B cell (primary cell): ENCODE measurements at regions of chr5 and their contacts with region 1.

Region 1: DNA sequence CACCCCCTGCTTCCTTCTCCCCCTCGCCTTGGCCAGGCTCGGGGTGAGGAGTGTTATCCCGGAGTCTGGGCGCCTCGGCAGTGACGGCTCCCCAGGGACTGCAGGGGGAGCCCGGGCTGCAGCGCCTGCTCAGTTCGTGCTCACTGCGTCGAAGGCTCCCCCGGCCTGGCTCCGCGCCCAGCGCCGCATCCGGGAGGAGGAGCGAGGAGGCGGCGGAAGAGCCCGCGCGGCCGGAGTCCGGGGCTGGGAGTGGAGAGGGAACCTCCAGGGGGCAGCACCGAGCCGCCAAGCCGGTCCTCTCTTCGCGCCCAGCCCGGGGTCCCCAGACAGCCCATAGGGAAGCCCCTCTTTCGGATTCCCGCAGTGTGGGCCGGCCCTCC is 1.3 kb upstream of the EGR1 start:
- DNase-seq: peak; percentile 96
- ATAC-seq: peak; percentile 53
- H3K4me3 ChIP-seq: peak overlapping the region; percentile 57 to 98 (median 67)
- H3K4me3 Mint-ChIP-seq: peak overlapping the region; percentile 94
- H3K27ac ChIP-seq: peak overlapping the region; percentile 89 to 98
- H3K27ac Mint-ChIP-seq: peak overlapping the region; percentile 81
- H3K4me1 ChIP-seq: peaks cover 27 to 43% of the 10 kb centered on the region in 2 donors
- H3K4me1 Mint-ChIP-seq: peaks cover 52% of the 10 kb centered on the region
- H3K27me3 ChIP-seq: no peaks in the 10 kb centered on the region
- H3K27me3 Mint-ChIP-seq: no peaks in the 10 kb centered on the region
- CTCF ChIP-seq: peak; percentile 93

Region 2: GRCh38 chr5:137264573-137264972 is 1199.4 kb before region 1 on chr5:
- CTCF ChIA-PET with region 1: no interaction called
- POLR2A ChIA-PET with region 1: no interaction called
- intact Hi-C with region 1: no loop called
- DNase-seq: no peak
- ATAC-seq: no peak
- H3K4me3 ChIP-seq: no peak overlapping the region
- H3K4me3 Mint-ChIP-seq: no peak overlapping the region
- H3K27ac ChIP-seq: no peak overlapping the region
- H3K27ac Mint-ChIP-seq: no peak overlapping the region
- H3K4me1 ChIP-seq: no peaks in the 10 kb centered on the region
- H3K4me1 Mint-ChIP-seq: no peaks in the 10 kb centered on the region
- H3K27me3 ChIP-seq: no peaks in the 10 kb centered on the region
- H3K27me3 Mint-ChIP-seq: peaks cover 11% of the 10 kb centered on the region
- CTCF ChIP-seq: no peak

Region 3: GRCh38 chr5:138213161-138214029 is 250.6 kb before region 1 on chr5 and contains the start of gene CDC23:
- CTCF ChIA-PET with region 1: no interaction called
- POLR2A ChIA-PET with region 1: no interaction called
- intact Hi-C with region 1: loop called (anchors 1 kb)
- DNase-seq: peak; percentile 95
- ATAC-seq: peak; percentile 97
- H3K4me3 ChIP-seq: peak within 1 kb of the TSS; percentile 77 to 99 (median 93)
- H3K4me3 Mint-ChIP-seq: peak within 1 kb of the TSS; percentile 93
- H3K27ac ChIP-seq: peak within 1 kb of the TSS; percentile 52 to 87
- H3K27ac Mint-ChIP-seq: peak within 1 kb of the TSS; percentile 92
- H3K4me1 ChIP-seq: peaks cover 10 to 20% of the 10 kb centered on the region in 2 donors
- H3K4me1 Mint-ChIP-seq: peaks cover 19% of the 10 kb centered on the region
- H3K27me3 ChIP-seq: no peaks in the 10 kb centered on the region
- H3K27me3 Mint-ChIP-seq: no peaks in the 10 kb centered on the region
- CTCF ChIP-seq: no peak
- total RNA-seq, gene CDC23: 29.7 and 35.4 TPM in 2 replicates

Region 4: DNA sequence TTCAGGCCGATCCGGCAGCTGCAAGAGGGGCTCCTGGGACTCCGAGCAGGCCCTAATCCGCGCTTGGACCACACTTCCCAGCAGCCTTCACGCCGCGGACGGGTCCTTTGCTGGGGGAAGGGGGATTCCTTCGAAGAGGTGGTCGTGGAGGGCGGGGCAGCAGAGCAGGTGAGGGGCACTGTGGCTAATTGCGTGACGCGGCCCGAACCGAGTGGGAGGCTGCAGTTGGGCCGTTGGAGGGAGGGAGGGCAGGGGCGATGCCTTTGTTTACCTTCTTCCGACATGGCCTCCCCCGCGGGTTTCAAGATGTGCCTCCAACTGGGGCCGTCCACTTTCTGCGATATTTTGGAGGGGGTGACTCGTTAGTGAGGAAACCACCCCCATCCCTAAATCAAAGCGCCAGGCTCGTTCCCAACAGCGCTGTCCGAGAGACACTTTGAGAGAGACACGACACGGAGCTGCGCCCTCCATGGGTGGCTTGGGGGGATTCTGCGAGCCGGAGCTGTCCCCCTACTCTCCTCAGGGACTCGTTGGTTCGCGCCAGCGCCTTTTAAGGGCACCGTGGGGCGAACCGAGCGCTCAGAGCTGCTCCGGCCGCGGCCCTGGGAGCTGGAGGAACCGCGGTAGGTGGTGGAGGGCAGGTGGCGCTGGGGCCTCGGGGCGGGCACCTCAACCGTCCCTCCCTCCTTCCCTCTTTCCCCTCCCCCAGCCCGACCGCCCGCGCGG is 126.2 kb before region 1 on chr5 and contains the start of gene FAM53C:
- CTCF ChIA-PET with region 1: interaction called, 3 read pairs
- POLR2A ChIA-PET with region 1: no interaction called
- intact Hi-C with region 1: loop called (anchors 1 kb)
- DNase-seq: peak; percentile 99
- ATAC-seq: peak; percentile 82
- H3K4me3 ChIP-seq: peak within 1 kb of the TSS; percentile 55 to 90 (median 67)
- H3K4me3 Mint-ChIP-seq: peak within 1 kb of the TSS; percentile 92
- H3K27ac ChIP-seq: peak within 1 kb of the TSS; percentile 96 to 99
- H3K27ac Mint-ChIP-seq: peak within 1 kb of the TSS; percentile 100
- H3K4me1 ChIP-seq: peaks cover 22 to 25% of the 10 kb centered on the region in 2 donors
- H3K4me1 Mint-ChIP-seq: peaks cover 35% of the 10 kb centered on the region
- H3K27me3 ChIP-seq: no peaks in the 10 kb centered on the region
- H3K27me3 Mint-ChIP-seq: no peaks in the 10 kb centered on the region
- CTCF ChIP-seq: no peak
- total RNA-seq, gene FAM53C: 29.3 and 29.8 TPM in 2 replicates

Region 5: GRCh38 chr5:138449501-138450239 is 14.3 kb before region 1 on chr5:
- CTCF ChIA-PET with region 1: interaction called, 65 read pairs
- POLR2A ChIA-PET with region 1: interaction called, 4 read pairs
- intact Hi-C with region 1: loop called (anchors 1 kb)
- DNase-seq: peak; percentile 85
- ATAC-seq: peak; percentile 95
- H3K4me3 ChIP-seq: peak overlapping the region in 2 of 5 experiments; percentile 5 to 19
- H3K4me3 Mint-ChIP-seq: no peak overlapping the region
- H3K27ac ChIP-seq: no peak overlapping the region
- H3K27ac Mint-ChIP-seq: peak overlapping the region; percentile 70
- H3K4me1 ChIP-seq: peaks cover 3 to 8% of the 10 kb centered on the region in 2 donors
- H3K4me1 Mint-ChIP-seq: peaks cover 6% of the 10 kb centered on the region
- H3K27me3 ChIP-seq: no peaks in the 10 kb centered on the region
- H3K27me3 Mint-ChIP-seq: no peaks in the 10 kb centered on the region
- CTCF ChIP-seq: peak; percentile 95

Region 6: GRCh38 chr5:138503487-138504270 is 39.7 kb after region 1 on chr5:
- CTCF ChIA-PET with region 1: interaction called, 43 read pairs
- POLR2A ChIA-PET with region 1: no interaction called
- intact Hi-C with region 1: loop called (anchors 1 kb)
- DNase-seq: peak; percentile 73
- ATAC-seq: peak; percentile 78
- H3K4me3 ChIP-seq: no peak overlapping the region
- H3K4me3 Mint-ChIP-seq: no peak overlapping the region
- H3K27ac ChIP-seq: no peak overlapping the region
- H3K27ac Mint-ChIP-seq: no peak overlapping the region
- H3K4me1 ChIP-seq: no peaks in the 10 kb centered on the region
- H3K4me1 Mint-ChIP-seq: no peaks in the 10 kb centered on the region
- H3K27me3 ChIP-seq: no peaks in the 10 kb centered on the region
- H3K27me3 Mint-ChIP-seq: no peaks in the 10 kb centered on the region
- CTCF ChIP-seq: peak; percentile 74

Region 7: GRCh38 chr5:138575194-138576015 is 111.4 kb after region 1 on chr5 and contains the start of gene HSPA9:
- CTCF ChIA-PET with region 1: no interaction called
- POLR2A ChIA-PET with region 1: interaction called, 6 read pairs
- intact Hi-C with region 1: loop called (anchors 1 kb)
- DNase-seq: peak; percentile 100
- ATAC-seq: peak; percentile 85
- H3K4me3 ChIP-seq: peak within 1 kb of the TSS; percentile 80 to 98 (median 96)
- H3K4me3 Mint-ChIP-seq: peak within 1 kb of the TSS; percentile 96
- H3K27ac ChIP-seq: peak within 1 kb of the TSS; percentile 99 to 100
- H3K27ac Mint-ChIP-seq: peak within 1 kb of the TSS; percentile 100
- H3K4me1 ChIP-seq: peaks cover 16% of the 10 kb centered on the region in 2 donors
- H3K4me1 Mint-ChIP-seq: peaks cover 30% of the 10 kb centered on the region
- H3K27me3 ChIP-seq: no peaks in the 10 kb centered on the region
- H3K27me3 Mint-ChIP-seq: no peaks in the 10 kb centered on the region
- CTCF ChIP-seq: no peak
- total RNA-seq, gene HSPA9: 139 and 142 TPM in 2 replicates